ENCODE measurements at regions of chr5 and their contacts with region 1.

Region 1: GRCh38 chr5:76818844-76819831 is at the start of gene F2RL1:
- DNase-seq: peak; percentile 94
- H3K4me3 Mint-ChIP-seq: peak within 1 kb of the TSS; percentile 91
- H3K27ac Mint-ChIP-seq: peak within 1 kb of the TSS; percentile 79
- H3K4me1 Mint-ChIP-seq: peaks cover 30% of the 10 kb centered on the region
- H3K27me3 Mint-ChIP-seq: no peaks in the 10 kb centered on the region
- CTCF ChIP-seq: no peak
- total RNA-seq, gene F2RL1: 30.7 and 34.9 TPM in 2 replicates

Region 2: GRCh38 chr5:76571559-76571958 is 247.6 kb before region 1 on chr5:
- CTCF ChIA-PET with region 1: no interaction called
- POLR2A ChIA-PET with region 1: no interaction called
- intact Hi-C with region 1: no loop called
- DNase-seq: no peak
- H3K4me3 Mint-ChIP-seq: no peak overlapping the region
- H3K27ac Mint-ChIP-seq: no peak overlapping the region
- H3K4me1 Mint-ChIP-seq: no peaks in the 10 kb centered on the region
- H3K27me3 Mint-ChIP-seq: peaks cover 25% of the 10 kb centered on the region
- CTCF ChIP-seq: no peak

Region 3: GRCh38 chr5:76790632-76791290 is 28.4 kb before region 1 on chr5:
- CTCF ChIA-PET with region 1: interaction called, 4 read pairs
- POLR2A ChIA-PET with region 1: interaction called, 60 read pairs
- intact Hi-C with region 1: loop called (anchors 2 kb)
- DNase-seq: peak; percentile 92
- H3K4me3 Mint-ChIP-seq: peak overlapping the region; percentile 33
- H3K27ac Mint-ChIP-seq: peak overlapping the region; percentile 96
- H3K4me1 Mint-ChIP-seq: peaks cover 32% of the 10 kb centered on the region
- H3K27me3 Mint-ChIP-seq: no peaks in the 10 kb centered on the region
- CTCF ChIP-seq: no peak

Measured in MCF 10A (cell line).